A673 (cell line): ENCODE measurements at regions of chr4 and their contacts with region 1.

Region 1: DNA sequence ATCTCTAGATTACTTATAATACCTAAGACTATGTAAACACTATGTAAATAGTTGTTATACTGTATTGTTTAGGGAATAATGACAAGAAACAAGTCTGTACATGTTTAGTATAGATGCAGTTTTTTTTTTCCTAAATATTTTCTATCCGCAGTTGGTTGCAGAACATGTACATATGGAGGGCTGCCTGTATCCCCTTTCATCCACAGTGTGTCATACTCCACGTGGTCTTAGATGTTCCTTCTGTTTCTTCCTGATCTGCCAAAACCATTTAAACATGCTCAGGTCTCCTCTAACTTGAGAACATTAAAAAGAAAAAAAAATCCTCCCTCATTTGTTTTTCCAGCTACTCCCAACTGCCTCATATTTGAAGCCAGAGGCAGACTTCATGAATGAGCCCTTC is 14.0 kb downstream of the OCIAD1 start:
- DNase-seq: no peak
- H3K4me3 ChIP-seq: no peak overlapping the region
- H3K27ac ChIP-seq: no peak overlapping the region
- H3K4me1 ChIP-seq: no peaks in the 10 kb centered on the region
- H3K27me3 ChIP-seq: no peaks in the 10 kb centered on the region
- CTCF ChIP-seq: no peak

Region 2: DNA sequence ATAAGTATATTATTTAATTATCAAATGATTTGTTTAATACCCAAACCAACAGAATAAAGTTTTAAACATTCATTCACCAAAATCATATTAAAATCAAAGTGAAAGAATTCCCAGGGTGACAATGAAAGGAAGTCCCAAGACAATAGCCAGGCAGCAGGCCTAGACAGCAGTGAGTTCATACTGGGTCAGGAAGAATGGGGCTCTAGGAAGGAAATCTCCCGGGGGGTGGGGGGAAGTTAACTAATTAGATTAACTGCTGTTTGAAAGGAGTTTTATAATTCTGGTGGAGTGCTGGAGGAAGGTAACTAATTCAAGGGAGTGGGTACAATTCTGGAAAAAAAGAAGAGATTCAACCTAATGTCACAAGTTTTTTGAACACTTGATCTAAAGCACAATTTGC is 250.7 kb before region 1 on chr4:
- CTCF ChIA-PET with region 1: no interaction called
- POLR2A ChIA-PET with region 1: no interaction called
- intact Hi-C with region 1: loop called (anchors 5 kb)
- DNase-seq: peak; percentile 97
- H3K4me3 ChIP-seq: no peak overlapping the region
- H3K27ac ChIP-seq: no peak overlapping the region
- H3K4me1 ChIP-seq: peaks cover 25% of the 10 kb centered on the region
- H3K27me3 ChIP-seq: no peaks in the 10 kb centered on the region
- CTCF ChIP-seq: no peak